ENCODE measurements at regions of chrX and their contacts with region 1.

Region 1: DNA sequence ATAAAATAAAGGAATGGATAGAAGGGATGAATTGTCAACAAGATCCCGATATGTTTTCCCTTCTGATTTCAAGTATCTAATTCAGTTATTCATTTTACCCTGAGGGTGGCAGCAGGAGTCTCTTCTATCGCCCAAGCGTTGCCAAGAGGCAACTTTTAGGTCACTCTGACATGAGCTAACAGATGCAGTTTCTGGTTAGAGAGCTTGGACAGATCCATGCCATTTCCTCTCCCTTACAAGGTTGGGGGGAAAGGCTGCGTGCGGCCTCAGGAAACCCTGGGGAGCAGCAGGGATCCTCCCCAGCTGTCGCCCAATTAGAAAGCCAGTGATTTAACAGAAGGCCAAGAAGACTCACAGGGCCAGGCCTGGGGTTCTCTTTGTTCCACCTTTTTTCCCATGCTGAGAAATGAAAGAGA is 35.3 kb upstream of the WAS start:
- DNase-seq: peak; percentile 10 to 25
- ATAC-seq: peak in 7 of 8 donors; percentile 43 to 80 (median 74)
- H3K4me3 ChIP-seq: no peak overlapping the region
- H3K27ac ChIP-seq: peak overlapping the region in 2 of 10 donors; percentile 21 to 47
- H3K4me1 ChIP-seq: peaks cover 0 to 5% (median 0%) of the 10 kb centered on the region in 9 donors
- H3K27me3 ChIP-seq: peaks cover 0 to 7% (median 0%) of the 10 kb centered on the region in 7 donors
- CTCF ChIP-seq: peak in 7 of 9 donors; percentile 23 to 57 (median 50)

Region 2: DNA sequence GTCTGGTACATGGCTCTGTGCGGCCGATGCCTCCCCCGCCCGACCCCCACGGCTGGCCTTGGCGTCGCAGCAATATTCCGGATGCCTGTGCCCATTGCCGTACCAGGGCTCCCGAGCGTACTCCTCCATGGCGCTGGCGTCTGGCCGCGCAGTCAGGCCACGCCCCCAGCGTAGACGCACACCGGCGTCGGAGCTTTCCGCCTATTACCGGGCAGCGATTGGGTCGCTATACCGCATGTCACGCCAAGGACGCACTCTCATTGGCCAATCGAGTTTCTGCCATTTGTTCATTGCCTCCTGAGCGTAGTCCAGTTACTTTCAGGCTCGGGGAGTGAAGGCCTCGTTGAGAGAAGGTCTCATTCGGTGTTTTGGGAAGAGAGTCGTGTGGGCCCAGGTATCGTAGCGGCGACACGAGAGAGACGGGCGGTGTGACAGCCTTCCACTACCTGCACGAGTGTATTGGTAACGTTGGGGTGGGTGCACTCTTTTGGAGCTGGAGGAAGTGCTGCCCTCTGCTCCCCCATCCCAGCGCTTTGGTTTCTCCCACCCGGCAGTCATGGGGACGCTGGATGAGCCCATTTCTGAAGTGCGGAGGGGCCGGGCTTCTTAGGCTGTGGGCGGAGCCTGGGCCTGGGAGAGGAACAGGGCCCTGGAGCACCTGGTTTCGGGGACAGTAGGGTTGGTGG is 249.4 kb after region 1 on chrX and contains the starts of genes PQBP1 and TIMM17B:
- intact Hi-C with region 1: loop called in 1 of 10 experiments (anchors 10 kb)
- DNase-seq: peak; percentile 86 to 91
- ATAC-seq: peak; percentile 95 to 98 (median 97)
- H3K4me3 ChIP-seq: peak within 1 kb of the TSS; percentile 56 to 85 (median 74)
- H3K27ac ChIP-seq: peak within 1 kb of the TSS; percentile 87 to 97 (median 94)
- H3K4me1 ChIP-seq: peaks cover 0 to 24% (median 5%) of the 10 kb centered on the region in 9 donors
- H3K27me3 ChIP-seq: no peaks in the 10 kb centered on the region
- CTCF ChIP-seq: no peak
- total RNA-seq, gene PQBP1: 41.2 to 75.5 (median 52.8) TPM
- total RNA-seq, gene TIMM17B: 58.3 to 73.4 (median 64.7) TPM

Region 3: DNA sequence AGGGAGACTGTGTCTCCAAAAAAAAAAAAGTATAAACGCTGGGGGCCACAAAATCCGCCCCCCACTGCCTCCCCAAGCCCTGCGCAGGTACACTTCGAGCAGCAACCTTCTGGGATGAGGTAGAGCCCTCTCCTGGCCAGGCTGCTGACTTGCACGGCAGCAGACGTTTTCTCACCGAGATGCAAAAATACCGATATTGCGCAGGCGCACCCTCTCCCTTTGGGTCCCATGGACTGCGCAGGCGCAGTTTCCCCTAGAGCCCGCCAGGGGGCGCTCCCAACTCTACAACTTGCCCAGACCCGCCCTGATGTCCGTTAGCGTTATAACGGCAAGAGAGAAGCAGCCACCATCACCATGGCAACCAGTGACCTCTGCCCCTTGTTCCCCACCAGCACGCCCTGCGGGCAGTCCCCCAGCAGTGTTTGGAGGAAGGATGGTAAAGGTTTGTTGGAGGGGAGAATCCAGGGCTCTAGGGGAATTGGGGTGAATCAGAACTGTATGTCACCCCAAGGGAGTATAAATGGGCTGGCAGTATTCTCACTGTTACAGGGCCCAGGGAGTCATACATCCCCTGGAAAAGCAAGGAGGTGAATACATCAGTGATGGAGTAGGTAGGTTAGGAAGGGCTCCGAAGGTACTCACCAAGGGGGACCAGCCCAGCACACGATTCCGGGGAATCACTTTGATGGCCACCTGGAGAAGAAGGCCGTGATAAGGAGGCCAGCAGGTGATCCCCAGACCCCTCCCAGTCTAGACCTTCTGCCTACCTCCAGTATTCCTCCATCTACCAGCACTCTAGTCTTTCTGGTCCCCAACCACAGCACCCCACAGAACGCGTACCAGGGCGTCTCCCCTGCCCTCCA is 269.0 kb after region 1 on chrX:
- intact Hi-C with region 1: loop called in 2 of 10 experiments (anchors 10 kb)
- DNase-seq: peak; percentile 85 to 86
- ATAC-seq: peak; percentile 61 to 81 (median 73)
- H3K4me3 ChIP-seq: peak overlapping the region in 5 of 10 donors; percentile 7 to 68 (median 32)
- H3K27ac ChIP-seq: peak overlapping the region in 5 of 10 donors; percentile 6 to 91 (median 25)
- H3K4me1 ChIP-seq: peaks cover 0 to 32% (median 4%) of the 10 kb centered on the region in 9 donors
- H3K27me3 ChIP-seq: no peaks in the 10 kb centered on the region
- CTCF ChIP-seq: peak; percentile 79 to 95 (median 92)

Region 4: GRCh38 chrX:48945516-48946348 is 297.4 kb after region 1 on chrX:
- intact Hi-C with region 1: loop called in 1 of 10 experiments (anchors 5 kb)
- DNase-seq: peak; percentile 29 to 37
- ATAC-seq: peak in 5 of 8 donors; percentile 37 to 69 (median 66)
- H3K4me3 ChIP-seq: no peak overlapping the region
- H3K27ac ChIP-seq: no peak overlapping the region
- H3K4me1 ChIP-seq: peaks cover 0 to 22% (median 11%) of the 10 kb centered on the region in 9 donors
- H3K27me3 ChIP-seq: no peaks in the 10 kb centered on the region
- CTCF ChIP-seq: peak; percentile 30 to 84 (median 66)

Measured in heart right ventricle (tissue), 16 donors.